Dorsolateral prefrontal cortex (tissue), 120 donors: ENCODE measurements at regions of chr14 and their contacts with region 1.

Region 1: DNA sequence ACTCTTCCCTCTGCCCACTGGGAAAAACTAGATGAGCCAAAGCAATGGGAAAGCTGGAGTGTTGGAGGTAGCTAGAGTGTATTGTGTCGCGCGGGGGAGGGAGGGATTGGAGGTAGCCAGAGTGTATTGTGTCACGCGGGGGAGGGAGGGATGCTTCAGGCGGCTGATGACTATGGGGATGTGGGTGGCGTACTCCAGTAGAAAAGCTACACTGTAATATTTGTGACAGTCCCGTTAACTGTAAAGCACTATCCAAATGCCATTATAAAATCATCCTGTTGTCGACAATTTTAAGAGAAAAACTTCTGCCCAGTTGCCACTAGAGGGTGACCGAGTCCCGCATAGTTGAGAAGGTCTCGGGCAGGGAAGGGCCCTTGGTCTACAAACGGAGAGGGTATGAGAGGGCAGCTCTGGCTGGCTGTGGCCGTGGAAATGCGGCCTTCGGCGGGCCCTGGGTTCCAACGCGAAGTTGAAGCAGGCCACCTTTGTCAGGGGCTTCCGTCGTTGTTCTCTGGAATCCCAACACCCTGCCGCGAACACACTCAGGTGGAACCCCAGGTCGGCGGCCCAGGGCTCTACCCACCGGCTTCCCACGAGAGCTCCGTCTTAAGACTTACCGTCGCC is 15.1 kb upstream of the PLEK2 start:
- DNase-seq: peak; percentile 49 to 82 (median 76)
- H3K4me3 ChIP-seq: peak overlapping the region in 43 of 59 donors; percentile 0 to 47 (median 29)
- H3K27ac ChIP-seq: peak overlapping the region in 5 of 59 donors; percentile 5 to 39 (median 29)
- H3K27me3 ChIP-seq: no peaks in the 10 kb centered on the region
- CTCF ChIP-seq: peak; percentile 69 to 90 (median 83)

Region 2: GRCh38 chr14:67221248-67221981 is 205.7 kb before region 1 on chr14:
- intact Hi-C with region 1: no loop called
- DNase-seq: no peak
- H3K4me3 ChIP-seq: no peak overlapping the region
- H3K27ac ChIP-seq: no peak overlapping the region
- H3K27me3 ChIP-seq: no peaks in the 10 kb centered on the region
- CTCF ChIP-seq: no peak

Region 3: GRCh38 chr14:67477926-67478799 is 51.1 kb after region 1 on chr14:
- intact Hi-C with region 1: no loop called
- DNase-seq: no peak
- H3K4me3 ChIP-seq: no peak overlapping the region
- H3K27ac ChIP-seq: no peak overlapping the region
- H3K27me3 ChIP-seq: no peaks in the 10 kb centered on the region
- CTCF ChIP-seq: no peak

Region 4: GRCh38 chr14:67526676-67527459 is 99.8 kb after region 1 on chr14:
- intact Hi-C with region 1: loop called in 1 of 2 experiments (anchors 5 kb)
- DNase-seq: peak in 7 of 10 donors; percentile 44 to 73 (median 56)
- H3K4me3 ChIP-seq: no peak overlapping the region
- H3K27ac ChIP-seq: peak overlapping the region in 55 of 59 donors; percentile 6 to 100 (median 77)
- H3K27me3 ChIP-seq: no peaks in the 10 kb centered on the region
- CTCF ChIP-seq: peak; percentile 55 to 96 (median 83)

Region 5: DNA sequence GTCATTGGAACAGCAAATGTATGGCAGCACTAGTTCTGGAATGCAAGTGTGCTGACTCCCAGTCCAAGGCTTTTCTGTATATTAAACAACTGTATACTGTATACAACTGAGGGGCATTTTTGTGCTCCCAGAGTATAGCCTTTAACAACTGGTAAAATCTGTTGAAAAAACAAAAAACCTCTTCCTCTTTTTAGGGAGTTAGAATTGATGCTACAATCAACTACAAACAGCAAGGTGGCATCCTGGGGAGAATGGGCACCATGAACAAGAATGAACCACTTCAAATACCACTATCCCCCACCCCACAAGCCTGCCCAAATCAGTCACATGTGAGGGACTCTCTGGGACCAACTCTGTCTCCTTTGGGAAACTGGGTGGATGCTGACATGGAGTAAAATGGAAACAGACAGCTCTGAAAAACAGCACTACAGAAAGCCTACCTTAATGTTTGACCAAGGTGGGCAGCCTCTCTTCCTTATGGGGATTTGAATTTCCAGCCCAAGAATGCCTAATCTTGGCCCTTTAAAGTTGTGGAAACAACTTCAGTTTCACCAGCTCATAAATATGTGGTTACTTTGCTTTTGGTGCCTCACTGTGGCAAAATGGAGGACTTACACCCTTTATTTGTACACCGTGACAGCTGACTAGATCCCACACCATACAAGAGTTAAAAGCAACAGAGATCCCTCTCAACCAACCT is 239.8 kb after region 1 on chr14:
- intact Hi-C with region 1: loop called (anchors 2 to 10 kb)
- DNase-seq: peak in 2 of 10 donors; percentile 28 to 29
- H3K4me3 ChIP-seq: no peak overlapping the region
- H3K27ac ChIP-seq: peak overlapping the region in 2 of 59 donors; percentile 11 to 30
- H3K27me3 ChIP-seq: no peaks in the 10 kb centered on the region
- CTCF ChIP-seq: peak in 55 of 56 donors; percentile 50 to 83 (median 67)

Region 6: DNA sequence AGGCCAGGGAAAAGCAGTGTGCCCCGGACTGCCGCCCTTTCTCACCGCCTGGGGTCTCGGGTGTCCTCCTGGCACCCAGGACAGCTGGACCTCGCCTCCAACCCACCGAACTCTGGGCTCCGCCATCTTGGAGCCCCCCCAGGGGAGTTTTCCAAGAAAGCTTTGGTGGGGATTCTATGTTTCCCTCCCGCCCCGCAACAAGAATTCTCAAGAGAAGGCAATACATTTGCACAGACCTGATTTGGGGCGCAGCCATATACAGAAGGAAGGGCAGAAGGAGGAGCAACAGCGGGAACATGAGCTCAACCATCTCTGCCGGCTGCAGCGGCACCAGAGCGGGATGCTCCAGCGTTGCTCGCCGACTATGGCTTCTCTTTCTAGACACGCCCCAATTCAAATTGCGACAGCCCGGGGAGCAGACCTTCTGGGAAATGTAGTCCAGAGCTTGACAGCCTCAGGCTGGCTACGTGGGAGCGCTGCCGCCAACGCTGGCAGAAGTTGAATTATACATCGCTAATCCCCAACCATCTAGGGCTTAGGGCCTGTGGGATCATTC is 268.4 kb after region 1 on chr14 and contains the start of gene RDH11:
- intact Hi-C with region 1: loop called (anchors 5 to 10 kb)
- DNase-seq: peak; percentile 68 to 94 (median 90)
- H3K4me3 ChIP-seq: peak within 1 kb of the TSS; percentile 62 to 99 (median 90)
- H3K27ac ChIP-seq: peak within 1 kb of the TSS in 58 of 59 donors; percentile 27 to 93 (median 80)
- H3K27me3 ChIP-seq: no peaks in the 10 kb centered on the region
- CTCF ChIP-seq: peak in 29 of 56 donors; percentile 6 to 54 (median 27)
- total RNA-seq, gene RDH11: 51.8 to 100 (median 78.6) TPM